HepG2 (cell line): ENCODE measurements at regions of chr15 and their contacts with region 1.

Region 1: GRCh38 chr15:90362936-90363212 is 10.8 kb downstream of the ZNF774 start:
- DNase-seq: no peak
- ATAC-seq: no peak
- H3K4me3 ChIP-seq: no peak overlapping the region
- H3K27ac ChIP-seq: no peak overlapping the region
- H3K4me1 ChIP-seq: no peaks in the 10 kb centered on the region
- H3K27me3 ChIP-seq: no peaks in the 10 kb centered on the region
- CTCF ChIP-seq: no peak
- EP300 ChIP-seq: no peak
- POLR2A ChIP-seq: no peak
- RAD21 ChIP-seq: no peak

Region 2: DNA sequence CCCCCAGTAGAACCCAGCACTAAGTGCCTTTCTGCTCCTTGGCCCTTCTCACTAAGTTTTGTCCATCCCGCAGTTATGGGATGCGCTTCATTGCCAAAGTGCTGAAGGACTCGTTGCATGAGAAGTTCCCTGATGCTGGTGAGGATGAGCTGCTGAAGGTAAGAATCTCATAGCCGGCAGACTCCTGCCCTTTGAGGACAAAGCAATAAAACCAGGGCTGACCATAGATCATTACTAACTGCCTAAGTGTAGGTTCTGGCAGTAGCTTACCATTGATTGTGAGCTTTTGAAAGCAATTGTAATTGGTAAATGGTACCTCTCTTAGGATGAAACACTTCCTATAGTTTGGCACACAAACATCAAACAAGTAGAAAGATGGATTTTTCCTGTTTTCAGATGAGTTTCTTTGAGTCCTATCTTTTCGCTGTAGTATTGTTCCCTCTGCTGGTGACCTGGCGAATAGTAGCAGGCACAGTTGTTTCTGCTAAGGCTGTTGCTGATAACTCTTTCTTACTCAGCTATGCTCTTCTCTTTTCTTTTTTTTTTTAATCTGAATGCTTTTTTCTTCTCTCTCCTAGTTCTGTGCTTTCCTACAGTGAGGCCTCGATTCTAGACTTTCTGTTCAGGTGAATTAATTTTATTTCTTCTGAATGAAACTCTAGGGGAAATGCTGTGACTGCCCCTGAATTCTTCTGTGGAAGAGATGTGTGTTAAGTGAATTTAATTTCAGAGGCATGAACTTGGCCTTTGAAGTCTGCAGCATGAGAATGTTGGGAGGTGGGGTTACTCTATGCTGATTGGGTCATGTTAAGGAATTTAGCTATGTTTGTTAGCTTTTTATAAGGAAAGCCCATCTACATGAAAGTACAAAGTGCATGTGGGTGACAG is 119.5 kb after region 1 on chr15:
- CTCF ChIA-PET with region 1: interaction called, 12 read pairs
- POLR2A ChIA-PET with region 1: no interaction called
- in situ Hi-C with region 1: loop called (anchors 10 kb)
- intact Hi-C with region 1: loop called (anchors 1 kb)
- DNase-seq: peak; percentile 80
- ATAC-seq: peak; percentile 80
- H3K4me3 ChIP-seq: no peak overlapping the region; a peak in 1 of 6 replicates
- H3K27ac ChIP-seq: no peak overlapping the region
- H3K4me1 ChIP-seq: peaks cover 32% of the 10 kb centered on the region
- H3K27me3 ChIP-seq: no peaks in the 10 kb centered on the region
- CTCF ChIP-seq: peak; percentile 83
- EP300 ChIP-seq: no peak
- POLR2A ChIP-seq: no peak
- RAD21 ChIP-seq: peak; percentile 79